ENCODE measurements at regions of chr1 and their contacts with region 1.

Region 1: GRCh38 chr1:234486498-234487448 is 7.8 kb upstream of the TARBP1 start:
- DNase-seq: peak; percentile 66
- H3K4me3 Mint-ChIP-seq: no peak overlapping the region
- H3K27ac Mint-ChIP-seq: peak overlapping the region; percentile 91
- H3K4me1 Mint-ChIP-seq: peaks cover 41% of the 10 kb centered on the region
- H3K27me3 Mint-ChIP-seq: peaks cover 12% of the 10 kb centered on the region

Region 2: DNA sequence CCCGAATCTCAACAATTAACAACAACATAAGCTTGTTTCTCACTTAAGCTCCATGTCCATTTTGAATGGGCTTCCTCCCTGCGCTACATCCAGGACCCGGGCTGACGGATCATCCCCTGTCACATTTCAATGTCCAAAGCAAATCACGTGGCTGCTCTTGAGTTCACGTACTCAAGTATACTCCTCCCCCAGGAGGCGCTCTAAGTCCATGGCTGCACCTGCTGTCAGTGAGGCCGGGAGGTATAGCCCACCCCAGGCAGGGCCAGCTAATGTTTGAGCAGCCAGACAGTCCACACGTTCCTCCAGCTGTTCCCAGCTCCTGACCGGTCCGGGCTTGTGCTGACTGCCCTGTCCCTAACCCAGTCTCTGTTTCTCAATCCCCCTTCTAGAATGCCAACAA is 361.5 kb before region 1 on chr1:
- CTCF ChIA-PET with region 1: no interaction called
- intact Hi-C with region 1: no loop called
- DNase-seq: peak; percentile 57
- H3K4me3 Mint-ChIP-seq: no peak overlapping the region
- H3K27ac Mint-ChIP-seq: no peak overlapping the region
- H3K4me1 Mint-ChIP-seq: no peaks in the 10 kb centered on the region
- H3K27me3 Mint-ChIP-seq: peaks cover 29% of the 10 kb centered on the region

Region 3: DNA sequence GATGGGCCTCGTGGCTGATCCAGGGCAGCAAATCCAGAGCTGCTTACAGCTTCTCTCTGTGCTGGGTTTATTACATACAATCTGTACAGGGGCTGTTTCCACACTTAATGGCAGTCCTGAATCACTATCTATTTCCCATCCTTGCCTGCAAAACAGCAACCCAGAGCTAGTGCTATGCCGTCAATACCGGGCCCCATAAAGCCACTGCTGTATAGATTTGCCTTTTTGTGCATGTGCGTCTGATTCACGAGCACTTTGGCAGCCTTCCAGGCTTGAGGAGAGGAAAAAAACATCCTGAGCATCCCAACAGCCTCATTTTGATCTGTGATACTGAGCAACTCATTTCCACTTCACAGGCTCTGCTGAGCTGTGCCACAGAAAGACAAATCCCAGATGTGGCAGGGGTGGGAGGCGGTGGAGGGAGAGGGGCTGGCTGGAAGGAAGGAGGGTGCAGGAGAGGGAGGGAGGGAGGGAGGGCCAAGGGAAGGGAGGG is 57.4 kb after region 1 on chr1:
- CTCF ChIA-PET with region 1: interaction called, 3 read pairs
- intact Hi-C with region 1: loop called (anchors 1 kb)
- DNase-seq: peak; percentile 89
- H3K4me3 Mint-ChIP-seq: no peak overlapping the region
- H3K27ac Mint-ChIP-seq: peak overlapping the region; percentile 69
- H3K4me1 Mint-ChIP-seq: peaks cover 19% of the 10 kb centered on the region
- H3K27me3 Mint-ChIP-seq: no peaks in the 10 kb centered on the region

Region 4: DNA sequence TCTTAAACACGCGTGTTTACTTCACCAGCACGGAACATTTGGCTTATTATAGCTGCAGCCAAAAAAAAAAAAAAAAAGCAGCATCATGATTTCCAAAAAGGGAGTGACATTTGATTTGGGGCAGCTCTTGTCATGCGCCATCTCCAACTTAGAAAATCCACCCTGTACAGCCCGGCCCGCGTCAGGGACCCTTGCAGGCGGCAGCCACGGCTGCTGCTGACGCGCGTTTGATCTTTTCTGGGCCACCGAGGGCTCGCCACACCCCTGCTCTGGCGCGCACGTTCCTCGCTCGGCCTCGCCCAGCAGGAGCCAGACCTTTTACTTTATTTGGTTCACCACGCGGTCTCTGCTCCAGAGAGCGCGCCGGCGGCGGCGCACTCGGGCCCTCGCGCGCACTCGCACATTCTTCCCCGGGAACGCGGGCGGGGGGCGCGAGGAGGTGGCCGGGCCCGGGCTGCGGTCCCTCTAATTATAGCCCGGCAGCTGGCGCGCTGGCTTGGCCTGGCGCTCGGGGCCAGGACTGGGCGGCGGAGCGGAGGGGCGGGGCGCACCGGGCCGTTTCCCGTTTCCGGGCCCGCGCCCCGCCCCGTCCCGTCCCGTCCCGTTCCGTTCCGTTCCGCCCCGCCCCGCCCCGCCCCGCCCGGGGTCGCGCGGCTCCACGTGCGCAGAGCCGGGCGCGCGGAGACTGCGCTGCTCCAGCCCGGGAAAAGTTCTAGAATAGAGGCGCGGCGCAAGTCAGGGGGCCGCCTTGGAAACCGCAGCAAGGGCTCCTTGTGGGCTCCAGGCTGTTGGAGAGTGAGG is 113.0 kb after region 1 on chr1:
- CTCF ChIA-PET with region 1: interaction called, 5 read pairs
- intact Hi-C with region 1: loop called (anchors 1 kb)
- DNase-seq: peak; percentile 74
- H3K4me3 Mint-ChIP-seq: peak overlapping the region; percentile 83
- H3K27ac Mint-ChIP-seq: peak overlapping the region; percentile 99
- H3K4me1 Mint-ChIP-seq: peaks cover 50% of the 10 kb centered on the region
- H3K27me3 Mint-ChIP-seq: no peaks in the 10 kb centered on the region

Measured in activated naive CD4-positive, alpha-beta T cell treated with anti-CD3 and anti-CD28 coated beads for 36 hours (primary cell).